PC-9 (cell line): ENCODE measurements at regions of chr5 and their contacts with region 1.

Region 1: DNA sequence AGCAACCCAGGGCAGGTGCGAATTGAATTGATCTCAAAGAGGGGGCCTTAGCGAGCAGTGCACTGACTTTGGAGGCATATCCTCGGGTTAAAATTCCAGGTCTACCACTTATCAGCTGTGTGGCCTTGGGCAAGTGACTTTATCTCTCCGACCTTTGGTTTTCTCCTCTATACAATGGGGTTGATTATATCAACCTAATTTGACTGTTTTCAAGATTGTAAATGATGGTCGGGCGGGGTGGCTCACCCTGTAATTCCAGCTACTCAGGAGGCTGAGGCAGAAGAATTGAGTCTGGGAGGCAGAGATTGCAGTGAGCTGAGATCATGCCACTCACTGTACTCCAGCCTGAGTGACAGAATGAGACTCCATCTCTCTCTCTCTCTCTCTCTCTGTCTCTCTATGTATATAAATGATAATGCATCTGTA is 18.7 kb downstream of the SPRY4 start:
- DNase-seq: no peak
- H3K4me3 ChIP-seq: no peak overlapping the region
- H3K27ac ChIP-seq: no peak overlapping the region
- H3K4me1 ChIP-seq: no peaks in the 10 kb centered on the region
- H3K27me3 ChIP-seq: no peaks in the 10 kb centered on the region
- CTCF ChIP-seq: no peak

Region 2: GRCh38 chr5:142358121-142358520 is 52.0 kb after region 1 on chr5:
- CTCF ChIA-PET with region 1: no interaction called
- POLR2A ChIA-PET with region 1: no interaction called
- intact Hi-C with region 1: no loop called
- DNase-seq: no peak
- H3K4me3 ChIP-seq: 0 out of 2 replicates have a peak overlapping the region, but pooled peaks have one; percentile 65
- H3K27ac ChIP-seq: peak overlapping the region; percentile 93
- H3K4me1 ChIP-seq: peaks cover 75% of the 10 kb centered on the region
- H3K27me3 ChIP-seq: no peaks in the 10 kb centered on the region
- CTCF ChIP-seq: no peak

Region 3: DNA sequence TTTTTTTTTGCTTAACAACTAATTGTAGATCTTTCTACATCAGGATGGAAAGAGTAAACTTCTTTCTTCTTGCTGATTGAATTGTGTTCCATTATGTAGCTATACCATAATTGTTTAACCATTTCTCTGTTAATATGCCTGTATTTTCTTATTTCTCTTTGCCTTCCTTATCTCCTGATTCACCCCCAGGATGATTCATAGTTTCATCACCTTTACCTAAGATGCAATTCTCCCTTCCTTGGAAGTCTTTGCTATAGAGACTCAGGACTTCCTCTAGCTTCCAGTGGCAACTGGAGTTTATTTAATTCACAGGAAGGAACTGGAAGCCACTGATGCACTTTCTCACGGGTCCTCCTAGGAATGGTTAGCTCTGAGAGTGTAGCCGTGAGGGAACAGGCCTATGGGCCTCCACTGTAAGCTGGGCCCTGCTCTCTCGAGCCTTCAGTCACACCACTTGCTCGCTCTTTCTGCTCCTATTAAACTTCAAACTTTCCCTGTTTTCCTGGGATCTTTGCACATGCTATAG is 296.7 kb after region 1 on chr5:
- CTCF ChIA-PET with region 1: interaction called, 11 read pairs
- POLR2A ChIA-PET with region 1: no interaction called
- intact Hi-C with region 1: no loop called
- DNase-seq: peak in 1 of 2 experiments; percentile 81
- H3K4me3 ChIP-seq: no peak overlapping the region
- H3K27ac ChIP-seq: peak overlapping the region; percentile 89
- H3K4me1 ChIP-seq: peaks cover 28% of the 10 kb centered on the region
- H3K27me3 ChIP-seq: no peaks in the 10 kb centered on the region
- CTCF ChIP-seq: no peak